Dorsolateral prefrontal cortex (tissue), 120 donors: ENCODE measurements at regions of chr4 and their contacts with region 1.

Region 1: DNA sequence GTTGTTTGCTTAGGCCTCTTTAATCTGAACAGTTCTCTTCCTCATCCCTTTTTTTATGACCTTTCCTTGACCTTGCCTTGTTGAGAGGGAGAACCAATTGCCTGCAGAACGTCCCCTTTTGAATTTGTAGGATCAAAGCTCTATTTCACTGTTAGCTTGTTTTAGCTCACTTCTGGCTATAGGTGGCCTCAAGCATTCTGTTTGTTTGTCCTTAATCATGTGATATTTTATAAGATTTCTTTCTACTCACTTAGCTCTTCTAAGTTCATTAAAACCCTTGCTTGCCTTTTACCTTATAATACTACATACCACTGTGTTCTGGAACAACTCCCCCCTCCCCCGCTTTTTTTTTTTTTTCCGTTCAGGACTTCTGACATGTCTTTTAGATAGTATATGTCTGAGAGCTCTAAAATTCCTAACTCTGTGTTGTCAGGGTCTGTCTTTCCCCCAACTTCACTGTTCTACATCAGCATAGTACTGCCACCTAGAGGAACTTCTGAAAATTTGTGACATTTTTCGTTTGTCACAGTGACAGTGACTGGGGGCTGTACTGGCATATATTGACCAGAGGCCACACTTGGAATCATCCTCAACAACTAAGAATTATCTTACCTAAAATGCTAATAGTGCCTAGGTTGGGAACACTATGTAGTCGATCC is 128.5 kb downstream of the LARP7 start:
- DNase-seq: no peak
- H3K4me3 ChIP-seq: no peak overlapping the region
- H3K27ac ChIP-seq: no peak overlapping the region
- H3K27me3 ChIP-seq: no peaks in the 10 kb centered on the region
- CTCF ChIP-seq: peak; percentile 16 to 68 (median 50)

Region 2: DNA sequence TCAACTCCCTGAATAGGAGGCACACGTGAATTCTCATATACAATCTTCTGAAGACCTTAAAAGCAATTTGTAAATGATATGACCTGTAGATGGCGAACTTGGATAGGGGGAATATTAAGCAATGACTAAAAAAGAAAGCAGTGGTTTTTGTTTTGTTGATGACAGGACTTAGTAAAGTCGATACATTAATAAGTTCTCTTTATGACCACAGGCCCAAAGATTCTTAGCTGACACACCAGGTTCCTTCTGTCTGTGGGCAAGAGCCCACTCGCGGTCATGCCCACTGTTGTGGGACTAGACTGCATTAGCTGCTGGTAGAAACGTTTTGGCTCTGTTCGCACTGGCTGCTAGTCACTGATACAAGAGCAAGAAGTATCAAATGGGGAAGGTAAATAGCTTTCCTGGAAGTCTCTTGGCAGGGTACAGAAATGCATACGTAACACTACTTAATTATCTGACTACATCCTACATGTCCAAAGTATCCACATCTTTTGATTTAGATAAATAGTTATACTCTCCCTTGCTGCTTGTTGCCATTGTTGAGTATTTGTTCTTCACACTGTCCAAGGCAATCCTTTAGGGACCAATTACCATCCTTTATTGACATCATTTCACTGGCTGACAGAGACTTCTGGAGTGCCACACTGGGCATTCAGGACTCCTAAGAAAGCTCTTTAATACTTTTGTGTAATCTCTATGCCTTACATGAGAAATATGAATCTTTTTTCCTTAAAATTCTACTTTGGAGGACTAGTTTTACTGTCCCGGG is 437.3 kb before region 1 on chr4:
- intact Hi-C with region 1: loop called in 1 of 2 experiments (anchors 10 kb)
- DNase-seq: no peak
- H3K4me3 ChIP-seq: peak overlapping the region in 37 of 59 donors; percentile 10 to 52 (median 36)
- H3K27ac ChIP-seq: no peak overlapping the region
- H3K27me3 ChIP-seq: no peaks in the 10 kb centered on the region
- CTCF ChIP-seq: peak in 55 of 56 donors; percentile 26 to 83 (median 64)

Region 3: GRCh38 chr4:112636688-112637551 is 128.5 kb before region 1 on chr4 and contains the starts of genes LARP7 and ZGRF1:
- intact Hi-C with region 1: loop called (anchors 2 to 5 kb)
- DNase-seq: peak; percentile 93 to 99 (median 98)
- H3K4me3 ChIP-seq: peak within 1 kb of the TSS; percentile 49 to 96 (median 78)
- H3K27ac ChIP-seq: peak within 1 kb of the TSS; percentile 86 to 100 (median 98)
- H3K27me3 ChIP-seq: no peaks in the 10 kb centered on the region
- CTCF ChIP-seq: peak; percentile 37 to 99 (median 82)
- total RNA-seq, gene LARP7: 20.0 to 45.1 (median 31.6) TPM
- total RNA-seq, gene ZGRF1: 6.6 to 28.0 (median 14.5) TPM

Region 4: DNA sequence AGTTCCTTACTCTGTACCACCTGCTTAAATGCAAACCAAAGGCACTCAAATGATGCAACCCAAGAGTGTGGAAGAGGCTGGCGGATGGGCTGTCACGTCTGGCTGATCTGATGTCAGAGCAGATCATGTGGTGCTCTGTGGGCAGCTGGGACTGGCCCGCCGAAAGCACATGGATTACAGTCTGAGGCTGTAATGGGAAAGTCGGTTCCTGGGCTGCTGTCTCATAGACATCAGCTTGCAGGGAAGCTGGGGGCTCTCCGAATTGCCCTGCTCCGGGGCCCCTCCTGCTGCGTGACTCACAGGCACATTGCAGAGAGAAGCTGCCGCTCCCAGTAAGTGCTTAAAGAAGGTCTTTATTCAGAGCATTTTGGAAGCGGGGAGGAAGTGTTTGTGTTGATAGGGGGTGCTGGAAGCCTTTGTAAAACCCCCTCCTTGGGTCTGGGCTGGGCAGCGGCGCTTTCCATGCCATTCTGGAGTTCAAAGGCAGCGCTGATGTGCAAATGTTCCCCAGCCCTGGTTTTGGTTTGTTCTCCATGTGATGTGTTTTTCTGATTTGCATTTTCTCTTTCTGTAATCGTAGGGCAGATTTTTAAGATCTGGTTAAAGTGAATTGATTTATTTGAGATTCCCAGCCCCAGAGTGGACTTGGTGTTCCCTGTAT is 52.6 kb after region 1 on chr4:
- intact Hi-C with region 1: loop called (anchors 5 to 10 kb)
- DNase-seq: peak; percentile 54 to 97 (median 93)
- H3K4me3 ChIP-seq: peak overlapping the region; percentile 48 to 90 (median 75)
- H3K27ac ChIP-seq: peak overlapping the region; percentile 54 to 96 (median 89)
- H3K27me3 ChIP-seq: no peaks in the 10 kb centered on the region
- CTCF ChIP-seq: peak in 41 of 56 donors; percentile 7 to 67 (median 35)

Region 5: DNA sequence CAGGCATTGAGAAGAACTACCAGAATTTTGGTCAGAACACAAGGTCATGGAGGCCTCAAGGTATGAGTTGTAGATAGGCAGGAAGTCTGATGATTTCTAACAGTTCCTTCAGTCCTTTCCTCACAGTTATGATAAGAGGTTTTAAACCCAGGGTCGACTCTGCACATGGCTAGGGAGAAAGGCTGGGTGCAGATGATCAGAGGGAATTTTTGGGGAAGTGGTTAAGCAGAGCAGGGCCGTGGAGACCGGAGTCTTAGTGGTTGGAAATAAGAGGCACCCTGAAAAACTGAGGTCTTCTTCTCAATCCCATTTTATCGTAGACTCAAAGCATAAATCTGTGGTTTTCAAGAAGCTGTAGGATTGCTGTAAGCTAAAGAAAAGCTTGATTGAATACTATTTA is 165.6 kb after region 1 on chr4:
- intact Hi-C with region 1: loop called in 1 of 2 experiments (anchors 5 kb)
- DNase-seq: no peak
- H3K4me3 ChIP-seq: no peak overlapping the region
- H3K27ac ChIP-seq: no peak overlapping the region
- H3K27me3 ChIP-seq: no peaks in the 10 kb centered on the region
- CTCF ChIP-seq: no peak

Region 6: DNA sequence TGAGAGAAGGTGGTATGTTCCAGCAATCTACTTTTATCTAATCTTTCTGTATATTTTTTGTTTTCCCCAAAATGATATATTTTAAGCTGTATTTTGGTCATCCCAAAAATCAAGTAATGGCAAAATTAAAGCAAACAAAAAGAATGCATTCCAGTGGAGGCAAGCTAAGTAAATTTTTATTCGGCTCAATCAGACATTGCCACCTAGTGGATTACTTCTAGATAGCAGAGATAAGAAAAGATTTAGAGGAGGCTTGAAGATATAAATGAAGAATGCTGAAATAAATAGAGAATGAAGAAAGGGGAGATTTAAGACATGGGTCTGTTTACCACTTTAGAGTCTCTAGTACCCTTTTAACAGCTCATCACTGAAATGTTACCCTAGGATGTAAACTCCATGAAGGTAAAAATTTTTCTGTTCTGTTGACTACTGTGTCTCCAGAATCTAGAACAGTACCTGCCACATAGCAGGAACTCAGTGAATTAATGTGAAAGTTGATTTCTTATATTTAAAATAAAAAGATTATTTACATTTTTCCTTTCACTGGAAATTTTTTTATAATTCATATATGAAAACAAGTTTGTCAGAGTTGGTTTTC is 173.1 kb after region 1 on chr4:
- intact Hi-C with region 1: loop called (anchors 2 to 5 kb)
- DNase-seq: no peak
- H3K4me3 ChIP-seq: no peak overlapping the region
- H3K27ac ChIP-seq: peak overlapping the region in 45 of 59 donors; percentile 6 to 76 (median 52)
- H3K27me3 ChIP-seq: no peaks in the 10 kb centered on the region
- CTCF ChIP-seq: peak; percentile 58 to 98 (median 85)

Region 7: GRCh38 chr4:113106108-113106507 is 340.7 kb after region 1 on chr4:
- intact Hi-C with region 1: loop called in 1 of 2 experiments (anchors 10 kb)
- DNase-seq: no peak
- H3K4me3 ChIP-seq: peak overlapping the region in 1 of 59 donors; percentile 2
- H3K27ac ChIP-seq: peak overlapping the region in 38 of 59 donors; percentile 0 to 87 (median 42)
- H3K27me3 ChIP-seq: no peaks in the 10 kb centered on the region
- CTCF ChIP-seq: peak in 55 of 56 donors; percentile 30 to 80 (median 65)